ENCODE measurements at regions of chr3 and their contacts with region 1.

Region 1: DNA sequence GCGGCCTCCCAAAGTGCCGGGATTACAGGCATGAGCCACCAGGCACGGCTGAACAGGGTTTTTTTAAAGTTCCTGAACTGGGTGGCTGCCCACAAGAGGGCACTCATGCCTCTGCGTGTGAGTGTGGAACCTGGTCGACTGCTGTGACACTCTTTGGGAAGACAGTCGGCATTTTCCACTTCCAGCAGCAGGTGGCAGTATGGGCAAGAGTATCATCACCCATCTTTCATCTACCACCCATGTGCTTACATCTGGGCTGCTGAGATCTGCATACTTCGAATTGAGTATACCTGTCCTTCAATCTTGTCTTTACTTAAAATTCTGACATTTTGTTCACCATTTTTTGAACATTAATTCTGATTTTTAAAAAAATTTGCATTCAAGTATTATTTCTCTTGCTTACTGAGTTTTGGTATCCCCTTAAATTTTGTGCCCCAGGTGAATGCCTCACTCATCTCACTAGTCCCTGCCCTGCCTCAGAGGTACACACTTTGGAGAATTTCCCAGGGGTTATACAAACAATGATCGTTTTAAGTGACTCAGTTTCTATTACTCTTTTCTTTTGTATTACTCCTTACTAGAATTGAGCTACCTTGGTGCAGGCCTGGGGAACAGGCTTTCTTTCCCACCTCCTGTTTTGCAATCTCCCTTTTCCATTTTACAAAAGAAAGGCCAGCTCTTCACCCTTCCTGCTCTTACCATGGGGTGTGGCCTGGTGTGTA is 11.8 kb downstream of the CLEC3B start:
- DNase-seq: peak; percentile 88 to 92
- H3K4me3 ChIP-seq: peak overlapping the region in 1 of 4 experiments; percentile 13; a peak in 1 of 8 replicates
- H3K27ac ChIP-seq: no peak overlapping the region
- H3K4me1 ChIP-seq: peaks cover 2 to 6% (median 4%) of the 10 kb centered on the region in 4 experiments
- H3K27me3 ChIP-seq: peaks cover 16 to 37% (median 33%) of the 10 kb centered on the region in 4 experiments
- CTCF ChIP-seq: peak; percentile 89 to 99 (median 99)
- EP300 ChIP-seq: no peak
- POLR2A ChIP-seq: no peak
- RAD21 ChIP-seq: peak; percentile 95 to 96

Region 2: GRCh38 chr3:44795197-44795596 is 242.7 kb before region 1 on chr3:
- CTCF ChIA-PET with region 1: no interaction called
- POLR2A ChIA-PET with region 1: no interaction called
- DNase-seq: peak in 1 of 2 experiments; percentile 44
- H3K4me3 ChIP-seq: no peak overlapping the region
- H3K27ac ChIP-seq: no peak overlapping the region
- H3K4me1 ChIP-seq: peaks cover 0 to 3% (median 0%) of the 10 kb centered on the region in 4 experiments; a peak in 1 of 7 replicates
- H3K27me3 ChIP-seq: no peaks in the 10 kb centered on the region
- CTCF ChIP-seq: no peak
- EP300 ChIP-seq: no peak
- POLR2A ChIP-seq: no peak
- RAD21 ChIP-seq: no peak

Region 3: DNA sequence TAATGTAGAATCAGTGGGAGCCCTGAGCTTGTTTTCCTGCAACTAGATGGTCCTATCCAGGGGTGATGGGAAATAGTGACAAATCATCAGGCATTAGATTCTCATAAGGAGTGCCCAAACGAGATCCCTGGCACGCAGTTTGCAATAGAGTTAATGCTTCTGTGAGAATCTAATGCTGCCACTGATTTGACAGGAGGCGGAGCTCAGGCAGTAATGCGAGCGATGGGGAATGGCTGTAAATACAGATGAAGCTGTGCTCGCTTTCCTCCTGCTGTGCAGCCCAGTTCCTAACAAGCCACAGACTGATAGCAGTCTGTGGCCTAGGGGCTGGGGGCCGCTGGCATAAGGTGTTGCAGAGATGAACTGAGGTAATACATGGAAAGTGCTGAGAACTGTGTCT is 204.5 kb before region 1 on chr3:
- CTCF ChIA-PET with region 1: no interaction called
- POLR2A ChIA-PET with region 1: no interaction called
- DNase-seq: no peak
- H3K4me3 ChIP-seq: no peak overlapping the region
- H3K27ac ChIP-seq: no peak overlapping the region
- H3K4me1 ChIP-seq: no peaks in the 10 kb centered on the region
- H3K27me3 ChIP-seq: no peaks in the 10 kb centered on the region
- CTCF ChIP-seq: no peak
- EP300 ChIP-seq: no peak
- POLR2A ChIP-seq: no peak
- RAD21 ChIP-seq: no peak

Region 4: DNA sequence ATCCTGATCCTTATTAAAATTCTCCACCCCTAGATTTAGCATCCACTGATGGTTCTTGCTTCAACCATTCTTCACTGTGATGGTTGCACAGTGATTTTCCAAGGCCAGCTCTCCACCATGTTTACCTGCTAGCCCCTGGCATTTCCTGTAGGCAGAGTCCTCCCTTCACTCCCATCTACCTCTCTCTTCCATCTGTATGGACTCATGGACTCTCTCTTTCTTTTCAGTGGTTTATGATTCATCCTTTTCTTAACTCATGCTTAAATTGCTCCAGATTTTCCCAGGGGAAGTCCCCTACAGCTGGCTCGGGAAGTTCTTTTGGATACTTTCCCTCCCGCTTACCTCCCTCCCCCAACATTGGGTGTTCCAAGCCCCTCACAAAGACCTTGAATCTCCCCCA is 144.8 kb before region 1 on chr3:
- CTCF ChIA-PET with region 1: no interaction called
- POLR2A ChIA-PET with region 1: no interaction called
- DNase-seq: no peak
- H3K4me3 ChIP-seq: no peak overlapping the region
- H3K27ac ChIP-seq: no peak overlapping the region
- H3K4me1 ChIP-seq: peaks cover 0 to 5% (median 3%) of the 10 kb centered on the region in 4 experiments; a peak in 3 of 7 replicates
- H3K27me3 ChIP-seq: no peaks in the 10 kb centered on the region
- CTCF ChIP-seq: no peak
- EP300 ChIP-seq: no peak
- POLR2A ChIP-seq: no peak
- RAD21 ChIP-seq: no peak

Region 5: DNA sequence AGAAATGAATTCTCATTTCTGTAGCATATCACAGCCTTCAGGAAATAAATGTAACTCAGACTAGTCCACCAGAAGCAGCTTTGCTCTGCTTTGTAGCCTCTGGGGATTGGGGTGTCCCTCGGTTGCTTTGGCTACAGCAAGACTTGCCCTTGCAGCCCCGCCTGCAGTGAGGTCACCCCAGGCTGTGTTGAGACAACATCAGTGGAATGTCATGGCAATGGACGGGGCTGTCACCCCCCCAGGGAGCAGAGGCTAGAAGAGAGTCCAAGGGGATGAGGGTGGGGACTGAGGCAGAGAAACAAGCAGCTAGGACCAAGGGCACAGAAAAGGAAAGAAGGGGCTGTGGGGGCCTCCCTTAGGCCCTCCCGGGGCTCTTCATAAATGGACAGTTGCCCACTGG is 10.9 kb before region 1 on chr3:
- CTCF ChIA-PET with region 1: interaction called, 15 read pairs
- POLR2A ChIA-PET with region 1: interaction called, 3 read pairs
- DNase-seq: no peak
- H3K4me3 ChIP-seq: no peak overlapping the region
- H3K27ac ChIP-seq: no peak overlapping the region
- H3K4me1 ChIP-seq: no peaks in the 10 kb centered on the region; a peak in 4 of 7 replicates
- H3K27me3 ChIP-seq: peaks cover 0 to 2% (median 0%) of the 10 kb centered on the region in 4 experiments; a peak in 1 of 7 replicates
- CTCF ChIP-seq: no peak
- EP300 ChIP-seq: no peak
- POLR2A ChIP-seq: no peak
- RAD21 ChIP-seq: no peak

Region 6: GRCh38 chr3:45055411-45056143 is 17.7 kb after region 1 on chr3:
- CTCF ChIA-PET with region 1: interaction called, 263 read pairs
- POLR2A ChIA-PET with region 1: interaction called, 3 read pairs
- DNase-seq: no peak
- H3K4me3 ChIP-seq: no peak overlapping the region
- H3K27ac ChIP-seq: no peak overlapping the region
- H3K4me1 ChIP-seq: peaks cover under 1 to 6% (median 2%) of the 10 kb centered on the region in 4 experiments; a peak in 5 of 7 replicates
- H3K27me3 ChIP-seq: peaks cover 10 to 40% (median 35%) of the 10 kb centered on the region in 4 experiments
- CTCF ChIP-seq: peak; percentile 51 to 60 (median 58)
- EP300 ChIP-seq: no peak
- POLR2A ChIP-seq: no peak
- RAD21 ChIP-seq: peak; percentile 59 to 72

Region 7: DNA sequence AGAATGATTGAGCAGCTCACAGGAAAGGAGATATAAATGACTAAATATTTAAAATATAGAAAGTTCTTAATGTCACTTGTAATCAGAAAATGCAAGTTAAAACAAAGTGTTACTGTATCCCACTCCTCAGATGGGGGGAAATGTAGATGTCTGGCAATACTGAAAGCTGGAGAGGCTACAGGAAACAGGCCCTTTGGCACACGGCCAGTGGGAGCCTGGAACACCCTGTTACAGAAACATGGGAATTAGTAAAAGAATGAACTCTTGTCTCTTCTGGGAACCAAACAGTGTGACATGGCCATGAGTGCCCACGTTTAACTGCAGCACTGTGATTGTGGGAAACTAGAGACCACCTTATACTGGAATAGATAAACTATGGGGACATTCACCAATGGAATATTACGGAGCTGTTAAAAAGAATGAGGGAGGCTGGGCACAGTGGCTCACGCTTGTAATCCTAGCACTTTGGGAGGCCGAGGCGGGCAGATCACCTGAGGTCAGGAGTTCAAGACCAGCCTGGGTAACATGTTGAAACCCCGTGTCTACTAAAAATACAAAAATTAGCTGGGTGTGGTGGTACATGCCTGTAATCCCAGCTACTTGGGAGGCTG is 58.1 kb after region 1 on chr3:
- CTCF ChIA-PET with region 1: interaction called, 14 read pairs
- POLR2A ChIA-PET with region 1: interaction called, 4 read pairs
- DNase-seq: no peak
- H3K4me3 ChIP-seq: no peak overlapping the region
- H3K27ac ChIP-seq: no peak overlapping the region
- H3K4me1 ChIP-seq: no peaks in the 10 kb centered on the region
- H3K27me3 ChIP-seq: no peaks in the 10 kb centered on the region; a peak in 1 of 7 replicates
- CTCF ChIP-seq: no peak
- EP300 ChIP-seq: no peak
- POLR2A ChIP-seq: no peak
- RAD21 ChIP-seq: no peak

Region 8: GRCh38 chr3:45218578-45219390 is 180.9 kb after region 1 on chr3:
- CTCF ChIA-PET with region 1: interaction called, 62 read pairs
- POLR2A ChIA-PET with region 1: no interaction called
- DNase-seq: no peak
- H3K4me3 ChIP-seq: no peak overlapping the region
- H3K27ac ChIP-seq: no peak overlapping the region
- H3K4me1 ChIP-seq: peaks cover 0 to 5% (median 0%) of the 10 kb centered on the region in 4 experiments; a peak in 2 of 7 replicates
- H3K27me3 ChIP-seq: no peaks in the 10 kb centered on the region
- CTCF ChIP-seq: no peak
- EP300 ChIP-seq: no peak
- POLR2A ChIP-seq: no peak
- RAD21 ChIP-seq: no peak

Region 9: GRCh38 chr3:45507820-45508317 is 470.0 kb after region 1 on chr3:
- CTCF ChIA-PET with region 1: interaction called, 39 read pairs
- POLR2A ChIA-PET with region 1: no interaction called
- DNase-seq: peak in 1 of 2 experiments; percentile 61
- H3K4me3 ChIP-seq: peak overlapping the region in 1 of 4 experiments; percentile 3; a peak in 1 of 8 replicates
- H3K27ac ChIP-seq: peak overlapping the region; percentile 37; the same call in 1 of the 2 replicates
- H3K4me1 ChIP-seq: peaks cover 11 to 32% (median 22%) of the 10 kb centered on the region in 4 experiments; a peak in 6 of 7 replicates
- H3K27me3 ChIP-seq: no peaks in the 10 kb centered on the region
- CTCF ChIP-seq: peak; percentile 39 to 55 (median 54)
- EP300 ChIP-seq: no peak
- POLR2A ChIP-seq: no peak
- RAD21 ChIP-seq: peak; percentile 22 to 47; a peak in 3 of 4 replicates

Measured in H1 (cell line).